Thyroid gland (tissue), 4 donors: ENCODE measurements at regions of chr1 and their contacts with region 1.

Region 1: GRCh38 chr1:25204797-25205480 is 27.4 kb downstream of the SYF2 start:
- DNase-seq: peak in 1 of 2 donors; percentile 8
- H3K4me3 ChIP-seq: no peak overlapping the region
- H3K27ac ChIP-seq: no peak overlapping the region
- H3K4me1 ChIP-seq: no peaks in the 10 kb centered on the region
- H3K27me3 ChIP-seq: no peaks in the 10 kb centered on the region
- CTCF ChIP-seq: peak; percentile 29 to 74 (median 67)
- POLR2A ChIP-seq: no peak

Region 2: GRCh38 chr1:24930204-24931145 is 274.5 kb before region 1 on chr1 and contains the start of gene RUNX3:
- intact Hi-C with region 1: loop called (anchors 10 kb)
- DNase-seq: peak in 1 of 2 donors; percentile 40
- H3K4me3 ChIP-seq: peak within 1 kb of the TSS in 1 of 3 donors; percentile 9
- H3K27ac ChIP-seq: no peak within 1 kb of the TSS
- H3K4me1 ChIP-seq: peaks cover 14 to 48% of the 10 kb centered on the region in 2 donors
- H3K27me3 ChIP-seq: peaks cover 71% of the 10 kb centered on the region
- CTCF ChIP-seq: no peak
- POLR2A ChIP-seq: no peak
- total RNA-seq, gene RUNX3: 0.27 to 2.8 (median 0.77) TPM

Region 3: DNA sequence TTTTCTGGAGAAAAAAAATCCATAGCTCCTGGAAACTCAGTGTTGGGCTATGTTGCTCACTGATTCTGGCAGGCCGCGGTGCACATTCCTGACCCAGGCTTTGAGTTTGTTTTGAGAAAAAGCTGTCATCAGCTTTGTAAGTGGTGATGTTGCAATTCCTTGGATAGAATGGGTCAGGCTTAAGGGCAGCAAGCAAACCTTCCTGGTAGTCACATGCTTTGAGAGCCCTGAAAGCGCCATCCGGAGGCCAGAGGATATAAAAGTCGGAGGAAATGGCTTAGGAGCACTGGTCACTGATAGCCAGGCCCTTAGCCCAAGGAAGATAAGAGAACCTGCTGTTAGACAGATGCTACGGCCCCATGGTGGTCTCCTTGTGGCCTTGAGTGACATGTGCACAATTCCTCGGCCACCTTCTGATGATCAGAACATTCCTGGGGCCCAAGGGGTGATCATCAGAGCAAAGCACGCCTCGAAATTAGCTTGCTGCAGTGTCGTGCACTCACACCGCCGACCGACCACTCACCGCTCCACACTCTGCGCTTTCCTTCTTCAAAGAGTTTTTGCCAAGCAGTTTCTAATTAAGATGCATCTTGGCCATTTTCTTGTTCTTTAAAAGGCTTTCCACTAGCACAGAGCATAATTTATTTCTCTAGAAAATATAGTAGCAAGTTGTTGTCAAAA is 490.3 kb after region 1 on chr1:
- intact Hi-C with region 1: no loop called
- DNase-seq: peak; percentile 89 to 91
- H3K4me3 ChIP-seq: no peak overlapping the region
- H3K27ac ChIP-seq: peak overlapping the region; percentile 93 to 96 (median 94)
- H3K4me1 ChIP-seq: peaks cover 37 to 60% of the 10 kb centered on the region in 2 donors
- H3K27me3 ChIP-seq: no peaks in the 10 kb centered on the region
- CTCF ChIP-seq: peak in 4 of 6 experiments; percentile 18 to 49 (median 35)
- POLR2A ChIP-seq: peak in 1 of 2 donors; percentile 63